Naive thymus-derived CD4-positive, alpha-beta T cell (primary cell): ENCODE measurements at regions of chr17 and their contacts with region 1.

Region 1: DNA sequence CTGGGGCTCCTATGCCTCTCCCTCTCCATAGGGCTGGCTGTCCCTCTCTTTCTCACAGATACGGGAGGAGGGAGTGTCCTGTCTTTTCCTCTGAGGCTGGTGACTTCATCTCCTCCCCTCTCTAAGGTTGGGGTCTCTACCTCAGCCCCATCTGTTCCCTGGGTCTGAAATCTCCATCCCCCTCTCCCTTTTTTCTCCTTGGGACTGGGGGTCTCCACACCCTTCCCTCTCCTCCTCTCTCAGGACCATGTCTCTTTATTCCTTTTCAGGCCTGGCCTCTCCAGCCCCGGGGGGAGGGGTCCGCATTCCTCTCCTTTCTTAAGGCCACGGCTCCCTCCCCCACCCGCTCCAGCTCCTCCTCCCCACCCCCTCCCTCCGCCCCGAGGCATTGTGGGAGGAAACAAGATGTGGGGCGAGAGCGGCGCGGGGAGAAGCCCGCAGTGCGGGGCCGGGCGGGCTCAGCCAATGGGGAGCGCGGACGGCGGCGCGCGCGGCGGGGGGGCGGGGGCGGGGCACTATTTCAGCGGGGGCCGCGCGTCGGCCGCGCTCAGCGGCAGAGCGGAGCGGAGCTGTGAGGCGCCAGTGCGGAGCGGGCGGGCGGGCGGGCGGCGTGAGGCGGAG is at the start of gene DYNLL2:
- DNase-seq: peak; percentile 74 to 88 (median 87)
- ATAC-seq: peak; percentile 91
- H3K4me3 ChIP-seq: peak within 1 kb of the TSS; percentile 88
- H3K4me3 Mint-ChIP-seq: peak within 1 kb of the TSS; percentile 88 to 95 (median 92)
- H3K27ac ChIP-seq: peak within 1 kb of the TSS; percentile 94
- H3K27ac Mint-ChIP-seq: peak within 1 kb of the TSS; percentile 81 to 95 (median 90)
- H3K4me1 ChIP-seq: peaks cover 23 to 34% of the 10 kb centered on the region in 2 donors
- H3K4me1 Mint-ChIP-seq: peaks cover 26 to 40% (median 34%) of the 10 kb centered on the region in 7 donors
- H3K27me3 ChIP-seq: no peaks in the 10 kb centered on the region
- H3K27me3 Mint-ChIP-seq: peaks cover 0 to 31% (median 0%) of the 10 kb centered on the region in 5 donors
- total RNA-seq, gene DYNLL2: 30.1 to 39.1 (median 35.1) TPM

Region 2: GRCh38 chr17:57662644-57663308 is 420.2 kb before region 1 on chr17:
- CTCF ChIA-PET with region 1: no interaction called
- POLR2A ChIA-PET with region 1: no interaction called
- intact Hi-C with region 1: no loop called
- DNase-seq: peak in 1 of 9 donors; percentile 10
- ATAC-seq: peak; percentile 78
- H3K4me3 ChIP-seq: no peak overlapping the region
- H3K4me3 Mint-ChIP-seq: no peak overlapping the region
- H3K27ac ChIP-seq: no peak overlapping the region
- H3K27ac Mint-ChIP-seq: peak overlapping the region in 2 of 9 donors; percentile 52 to 58
- H3K4me1 ChIP-seq: no peaks in the 10 kb centered on the region
- H3K4me1 Mint-ChIP-seq: peaks cover 0 to 10% (median 0%) of the 10 kb centered on the region in 7 donors
- H3K27me3 ChIP-seq: no peaks in the 10 kb centered on the region
- H3K27me3 Mint-ChIP-seq: no peaks in the 10 kb centered on the region

Region 3: DNA sequence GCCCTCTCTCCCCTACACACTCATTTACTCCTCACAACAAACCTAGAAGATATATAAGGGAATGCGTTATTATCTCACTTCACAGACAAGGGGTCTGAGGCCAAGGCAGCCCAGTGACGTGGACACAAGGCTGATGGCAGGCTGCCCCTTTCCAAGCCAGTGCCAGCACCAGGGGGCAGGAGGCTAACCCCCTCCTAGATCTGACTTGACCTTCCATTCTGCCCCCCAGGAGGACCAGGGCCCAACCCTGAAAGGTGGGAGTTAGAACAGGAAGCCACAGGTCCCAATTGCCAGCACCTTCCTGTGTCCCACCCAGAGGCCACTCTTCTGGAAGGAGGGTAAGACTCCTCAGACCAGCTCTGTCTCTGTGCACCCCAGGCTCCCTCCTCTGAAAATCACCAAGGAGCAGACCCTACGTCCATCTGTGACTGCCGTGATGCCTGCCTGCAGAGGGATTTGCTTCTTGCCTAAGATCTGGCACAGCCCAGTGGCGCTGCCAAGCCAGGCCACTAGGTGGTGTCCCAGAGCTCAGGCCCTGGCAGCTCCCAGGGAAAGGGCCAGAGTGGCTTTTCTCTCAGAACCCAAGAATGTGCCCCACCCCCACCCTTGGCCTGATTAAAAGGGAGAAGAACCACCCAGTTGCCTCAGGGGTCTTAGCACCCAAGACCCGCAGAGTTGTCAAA is 190.7 kb before region 1 on chr17:
- CTCF ChIA-PET with region 1: no interaction called
- POLR2A ChIA-PET with region 1: no interaction called
- intact Hi-C with region 1: loop called in 1 of 2 experiments (anchors 1 kb)
- DNase-seq: peak; percentile 44 to 81 (median 65)
- ATAC-seq: peak; percentile 87
- H3K4me3 ChIP-seq: no peak overlapping the region
- H3K4me3 Mint-ChIP-seq: no peak overlapping the region
- H3K27ac ChIP-seq: no peak overlapping the region
- H3K27ac Mint-ChIP-seq: no peak overlapping the region
- H3K4me1 ChIP-seq: no peaks in the 10 kb centered on the region
- H3K4me1 Mint-ChIP-seq: peaks cover 0 to 9% (median 4%) of the 10 kb centered on the region in 7 donors
- H3K27me3 ChIP-seq: no peaks in the 10 kb centered on the region
- H3K27me3 Mint-ChIP-seq: peaks cover 0 to 12% (median 0%) of the 10 kb centered on the region in 5 donors

Region 4: GRCh38 chr17:58112970-58113631 is 30.1 kb after region 1 on chr17:
- CTCF ChIA-PET with region 1: no interaction called
- POLR2A ChIA-PET with region 1: interaction called, 4 read pairs
- intact Hi-C with region 1: loop called (anchors 1 kb)
- DNase-seq: peak; percentile 62 to 86 (median 76)
- ATAC-seq: peak; percentile 96
- H3K4me3 ChIP-seq: no peak overlapping the region
- H3K4me3 Mint-ChIP-seq: no peak overlapping the region
- H3K27ac ChIP-seq: no peak overlapping the region
- H3K27ac Mint-ChIP-seq: peak overlapping the region in 1 of 9 donors; percentile 3
- H3K4me1 ChIP-seq: no peaks in the 10 kb centered on the region
- H3K4me1 Mint-ChIP-seq: peaks cover 0 to 5% (median 0%) of the 10 kb centered on the region in 7 donors
- H3K27me3 ChIP-seq: no peaks in the 10 kb centered on the region
- H3K27me3 Mint-ChIP-seq: peaks cover 0 to 16% (median 8%) of the 10 kb centered on the region in 5 donors

Region 5: DNA sequence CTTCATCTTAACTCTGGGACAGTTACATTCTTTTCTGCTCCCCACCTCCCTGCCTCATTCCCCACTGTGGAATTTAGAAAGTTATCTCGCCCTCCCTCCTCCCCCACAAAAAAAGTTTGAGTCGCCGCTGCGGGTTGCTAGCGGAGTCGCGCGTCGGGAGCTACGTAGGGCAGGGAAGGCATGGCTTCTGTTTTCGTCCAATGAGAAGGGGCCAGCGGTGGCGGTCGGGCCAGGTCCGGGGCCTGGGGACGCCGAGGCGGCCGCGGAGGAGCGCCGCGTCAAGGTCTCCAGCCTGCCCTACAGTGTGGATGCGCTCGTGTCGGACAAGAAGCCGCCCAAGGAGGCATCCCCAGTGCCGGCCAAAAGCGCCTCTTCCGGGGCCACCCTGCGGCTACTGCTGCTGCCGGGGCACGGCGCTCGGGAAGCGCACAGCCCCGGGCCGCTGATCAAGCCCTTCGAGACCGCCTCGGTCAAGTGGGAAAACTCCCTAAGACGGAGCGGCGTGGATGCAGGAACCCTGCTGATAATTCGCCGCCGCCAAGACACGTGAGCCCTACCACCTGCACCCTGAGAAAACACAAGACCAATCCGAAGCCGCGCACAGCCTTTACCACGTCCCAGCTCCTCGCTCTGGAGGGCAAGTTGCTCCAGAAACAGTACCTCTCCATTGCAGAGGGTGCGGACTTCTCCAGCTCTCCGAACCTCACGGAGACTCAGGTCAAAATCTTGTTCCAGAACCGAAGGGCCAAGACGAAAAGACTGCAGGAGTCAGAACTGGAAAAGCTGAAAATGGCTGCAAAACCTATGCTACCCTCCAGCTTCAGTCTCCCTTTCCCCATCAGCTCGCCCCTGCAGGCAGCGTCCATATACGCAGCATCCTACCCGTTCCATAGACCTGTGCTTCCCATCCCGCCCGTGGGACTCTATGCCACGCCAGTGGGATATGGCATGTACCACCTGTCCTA is 74.1 kb after region 1 on chr17:
- CTCF ChIA-PET with region 1: no interaction called
- POLR2A ChIA-PET with region 1: no interaction called
- intact Hi-C with region 1: loop called in 1 of 2 experiments (anchors 2 kb)
- DNase-seq: peak; percentile 31 to 61 (median 55)
- ATAC-seq: peak; percentile 74
- H3K4me3 ChIP-seq: peak overlapping the region; percentile 56
- H3K4me3 Mint-ChIP-seq: peak overlapping the region; percentile 90 to 97 (median 94)
- H3K27ac ChIP-seq: peak overlapping the region; percentile 88
- H3K27ac Mint-ChIP-seq: peak overlapping the region; percentile 86 to 98 (median 93)
- H3K4me1 ChIP-seq: peaks cover 40 to 48% of the 10 kb centered on the region in 2 donors
- H3K4me1 Mint-ChIP-seq: peaks cover 41 to 86% (median 73%) of the 10 kb centered on the region in 7 donors
- H3K27me3 ChIP-seq: no peaks in the 10 kb centered on the region
- H3K27me3 Mint-ChIP-seq: peaks cover 0 to 29% (median 0%) of the 10 kb centered on the region in 5 donors

Region 6: GRCh38 chr17:58219001-58219788 is 136.2 kb after region 1 on chr17 and contains the start of gene MKS1:
- CTCF ChIA-PET with region 1: no interaction called
- POLR2A ChIA-PET with region 1: no interaction called
- intact Hi-C with region 1: loop called (anchors 1 kb)
- DNase-seq: peak; percentile 90 to 96 (median 94)
- ATAC-seq: peak; percentile 98
- H3K4me3 ChIP-seq: peak within 1 kb of the TSS; percentile 68
- H3K4me3 Mint-ChIP-seq: peak within 1 kb of the TSS; percentile 86 to 96 (median 94)
- H3K27ac ChIP-seq: peak within 1 kb of the TSS; percentile 77
- H3K27ac Mint-ChIP-seq: peak within 1 kb of the TSS; percentile 92 to 98 (median 97)
- H3K4me1 ChIP-seq: peaks cover 8 to 9% of the 10 kb centered on the region in 2 donors
- H3K4me1 Mint-ChIP-seq: peaks cover 7 to 33% (median 23%) of the 10 kb centered on the region in 7 donors
- H3K27me3 ChIP-seq: no peaks in the 10 kb centered on the region
- H3K27me3 Mint-ChIP-seq: peaks cover 0 to 18% (median 0%) of the 10 kb centered on the region in 5 donors
- total RNA-seq, gene MKS1: 10.0 to 29.1 (median 19.7) TPM